Caco-2 (cell line): ENCODE measurements at regions of chr7 and their contacts with region 1.

Region 1: DNA sequence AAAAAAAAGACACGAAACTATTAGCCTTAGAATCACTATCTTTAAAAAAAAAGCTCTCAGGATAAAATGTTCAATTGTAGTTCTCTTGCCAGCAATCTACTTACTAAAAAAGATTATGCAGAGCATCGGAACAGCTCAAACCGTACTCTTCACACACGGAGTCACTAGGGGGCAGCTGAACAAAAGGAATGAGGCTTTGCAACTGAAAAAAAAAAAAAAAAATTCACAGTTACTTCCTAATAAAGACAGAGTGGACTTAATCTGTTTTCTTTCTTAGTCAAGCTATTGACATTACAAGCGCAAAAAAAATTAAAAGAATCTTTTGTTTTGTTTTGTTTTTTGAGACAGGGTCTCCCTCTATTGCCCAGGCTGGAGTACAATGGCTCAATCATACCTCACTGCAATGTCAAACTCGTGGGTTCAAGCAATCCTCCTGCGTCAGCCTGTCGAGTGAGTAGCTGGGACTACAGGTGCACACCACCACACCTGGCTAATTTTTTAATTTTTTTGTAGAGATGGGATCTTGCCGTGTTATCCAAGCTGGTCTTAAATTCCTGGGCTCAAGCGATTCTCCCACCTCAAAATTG is 11.5 kb downstream of the PMS2 start:
- DNase-seq: peak; percentile 63 to 71
- H3K4me3 ChIP-seq: no peak overlapping the region
- H3K4me3 Mint-ChIP-seq: no peak overlapping the region
- H3K27ac Mint-ChIP-seq: no peak overlapping the region
- H3K4me1 ChIP-seq: peaks cover 15% of the 10 kb centered on the region
- H3K4me1 Mint-ChIP-seq: peaks cover 10% of the 10 kb centered on the region
- H3K27me3 ChIP-seq: no peaks in the 10 kb centered on the region
- H3K27me3 Mint-ChIP-seq: no peaks in the 10 kb centered on the region
- CTCF ChIP-seq: peak; percentile 60 to 79

Region 2: DNA sequence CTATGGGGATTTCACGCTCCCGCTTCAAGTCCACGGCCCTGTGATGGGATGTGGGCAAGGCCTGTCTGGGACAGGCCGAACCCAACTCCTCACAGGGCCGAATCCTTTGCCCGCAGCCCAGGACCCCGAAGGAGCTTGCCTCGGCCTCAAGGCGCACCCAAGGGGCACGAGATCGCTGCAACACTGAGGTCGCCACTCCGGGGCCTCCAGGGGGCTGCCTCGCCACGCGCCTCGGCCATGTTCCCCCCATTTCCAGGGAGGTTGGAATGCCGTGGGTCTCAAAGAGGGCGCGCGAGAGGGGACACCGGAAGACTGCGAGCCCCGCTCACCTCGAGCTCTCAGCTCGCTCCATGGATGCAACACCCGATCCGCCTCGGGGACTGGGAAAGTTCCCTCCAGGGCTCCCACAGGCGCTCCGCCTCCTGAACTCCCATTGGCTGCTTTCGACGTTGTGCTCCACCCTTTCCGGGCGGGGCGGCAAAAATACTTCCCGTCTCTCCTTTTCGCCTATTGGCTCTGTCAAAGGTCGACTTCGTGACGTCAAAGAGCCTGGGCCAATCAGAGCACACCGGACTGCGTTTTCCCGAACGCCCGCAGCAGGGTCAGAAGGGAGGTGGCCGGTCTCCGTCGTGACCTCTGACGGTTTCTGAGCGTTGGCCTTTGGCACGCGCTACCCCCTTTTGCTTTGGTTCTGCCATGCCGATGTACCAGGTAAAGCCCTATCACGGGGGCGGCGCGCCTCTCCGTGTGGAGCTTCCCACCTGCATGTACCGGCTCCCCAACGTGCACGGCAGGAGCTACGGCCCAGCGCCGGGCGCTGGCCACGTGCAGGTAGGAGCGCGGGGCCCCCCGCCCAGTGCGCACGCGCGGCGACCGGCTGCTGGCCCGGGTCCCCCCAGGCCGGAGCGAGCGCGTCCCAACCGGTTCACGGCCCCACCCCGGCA is 11.6 kb after region 1 on chr7 and contains the starts of genes AIMP2 and PMS2:
- CTCF ChIA-PET with region 1: interaction called, 18 read pairs
- POLR2A ChIA-PET with region 1: interaction called, 11 read pairs
- intact Hi-C with region 1: loop called (anchors 1 kb)
- DNase-seq: peak; percentile 99
- H3K4me3 ChIP-seq: peak within 1 kb of the TSS; percentile 77
- H3K4me3 Mint-ChIP-seq: peak within 1 kb of the TSS; percentile 84
- H3K27ac Mint-ChIP-seq: peak within 1 kb of the TSS; percentile 90
- H3K4me1 ChIP-seq: peaks cover 8% of the 10 kb centered on the region
- H3K4me1 Mint-ChIP-seq: peaks cover 13% of the 10 kb centered on the region
- H3K27me3 ChIP-seq: no peaks in the 10 kb centered on the region
- H3K27me3 Mint-ChIP-seq: no peaks in the 10 kb centered on the region
- CTCF ChIP-seq: peak in 1 of 2 experiments; percentile 18
- total RNA-seq, gene AIMP2: 85.1 and 96.3 TPM in 2 replicates
- total RNA-seq, gene PMS2: 22.6 TPM in 2 replicates

Region 3: DNA sequence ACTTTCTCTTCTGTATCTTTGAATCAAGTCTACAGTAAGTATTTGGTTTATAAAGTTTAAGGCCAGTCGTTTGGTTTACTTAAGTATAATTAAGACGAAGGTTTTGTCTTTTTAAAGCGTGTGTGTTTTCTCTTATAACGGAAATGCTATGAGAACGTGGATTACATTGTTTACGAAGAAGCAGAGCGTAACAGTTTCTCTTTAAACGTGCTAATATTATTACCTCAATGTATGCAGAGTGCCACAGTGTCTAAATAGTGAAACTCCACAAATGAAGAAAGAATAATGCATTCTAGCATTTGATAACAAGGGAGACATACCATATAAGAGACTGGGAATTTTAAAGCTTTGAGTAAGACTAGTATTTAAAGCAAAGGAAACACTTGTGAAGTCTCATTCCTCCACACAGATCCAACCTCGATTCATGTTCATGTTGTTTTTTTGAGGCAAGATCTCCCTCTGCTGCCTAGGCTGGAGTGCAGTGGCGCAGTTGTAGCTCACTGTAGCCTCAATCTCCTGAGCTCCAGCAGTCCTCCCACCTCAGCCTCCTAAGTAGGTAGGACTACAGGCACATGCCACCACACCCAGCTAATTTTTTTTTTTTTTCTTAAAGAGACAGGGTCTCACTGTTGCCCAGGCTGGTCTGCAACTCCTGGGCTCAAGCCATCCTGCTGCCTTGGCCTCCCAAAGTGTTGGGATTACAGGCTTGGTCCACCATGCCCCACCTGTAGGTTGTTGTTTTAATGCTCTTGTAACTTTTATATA is 109.0 kb after region 1 on chr7:
- CTCF ChIA-PET with region 1: interaction called, 25 read pairs
- POLR2A ChIA-PET with region 1: interaction called, 4 read pairs
- intact Hi-C with region 1: loop called (anchors 1 kb)
- DNase-seq: peak; percentile 32 to 45
- H3K4me3 ChIP-seq: peak overlapping the region; percentile 90
- H3K4me3 Mint-ChIP-seq: peak overlapping the region; percentile 78
- H3K27ac Mint-ChIP-seq: peak overlapping the region; percentile 48
- H3K4me1 ChIP-seq: peaks cover 3% of the 10 kb centered on the region; the same call in 1 of the 2 replicates
- H3K4me1 Mint-ChIP-seq: peaks cover 13% of the 10 kb centered on the region
- H3K27me3 ChIP-seq: no peaks in the 10 kb centered on the region
- H3K27me3 Mint-ChIP-seq: no peaks in the 10 kb centered on the region
- CTCF ChIP-seq: peak in 1 of 2 experiments; percentile 9